PC-3 (cell line): ENCODE measurements at regions of chr4 and their contacts with region 1.

Region 1: GRCh38 chr4:65193985-65194384 is 476.3 kb downstream of the EPHA5 start:
- DNase-seq: no peak
- ATAC-seq: no peak
- H3K4me3 ChIP-seq: no peak overlapping the region
- H3K27ac ChIP-seq: no peak overlapping the region
- H3K4me1 ChIP-seq: peaks cover 5% of the 10 kb centered on the region
- H3K27me3 ChIP-seq: no peaks in the 10 kb centered on the region
- CTCF ChIP-seq: no peak

Region 2: DNA sequence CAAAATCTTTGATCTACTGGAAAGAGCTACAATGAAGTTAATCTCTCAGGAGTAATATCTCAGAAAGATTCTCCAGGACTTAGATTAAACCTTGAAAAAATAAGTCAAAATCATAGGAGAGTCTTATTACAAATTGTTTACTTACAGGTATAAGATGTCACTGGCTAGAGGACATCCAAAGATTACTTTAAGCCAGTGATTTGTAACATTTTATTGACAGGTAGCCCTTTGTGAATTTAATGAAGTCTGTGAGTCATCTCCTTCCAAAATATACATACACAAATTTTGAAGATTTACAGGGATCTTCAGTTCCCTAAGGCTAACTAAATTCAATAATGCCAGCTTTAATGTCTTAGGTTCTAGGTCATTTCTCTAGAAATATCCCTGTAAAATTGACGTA is 116.6 kb after region 1 on chr4:
- CTCF ChIA-PET with region 1: no interaction called
- POLR2A ChIA-PET with region 1: no interaction called
- intact Hi-C with region 1: loop called (anchors 1 kb)
- DNase-seq: peak; percentile 65
- ATAC-seq: peak; percentile 92
- H3K4me3 ChIP-seq: no peak overlapping the region
- H3K27ac ChIP-seq: no peak overlapping the region
- H3K4me1 ChIP-seq: peaks cover 10% of the 10 kb centered on the region
- H3K27me3 ChIP-seq: no peaks in the 10 kb centered on the region
- CTCF ChIP-seq: no peak

Region 3: DNA sequence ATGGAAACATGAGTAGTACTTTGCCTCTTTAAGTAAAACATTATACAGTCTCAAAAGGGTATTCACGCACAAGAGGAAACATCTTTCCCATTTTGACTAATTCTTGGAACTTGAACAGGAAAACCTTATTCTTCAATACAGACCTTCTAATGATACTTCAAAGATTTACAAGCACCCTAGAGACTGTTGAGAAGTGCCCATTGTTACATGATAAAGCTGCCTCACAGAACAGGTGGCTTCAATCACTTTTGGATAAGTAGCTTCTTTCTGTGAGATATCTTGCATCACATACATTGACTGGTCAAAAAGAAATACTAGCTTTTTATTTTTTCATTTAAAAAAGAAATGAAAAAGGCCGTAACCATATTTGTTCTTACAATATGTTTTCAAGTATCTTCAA is 256.9 kb after region 1 on chr4:
- CTCF ChIA-PET with region 1: no interaction called
- POLR2A ChIA-PET with region 1: interaction called, 17 read pairs
- intact Hi-C with region 1: no loop called
- DNase-seq: no peak
- ATAC-seq: no peak
- H3K4me3 ChIP-seq: no peak overlapping the region
- H3K27ac ChIP-seq: no peak overlapping the region
- H3K4me1 ChIP-seq: no peaks in the 10 kb centered on the region
- H3K27me3 ChIP-seq: no peaks in the 10 kb centered on the region
- CTCF ChIP-seq: no peak